ENCODE measurements at regions of chr10 and their contacts with region 1.

Region 1: GRCh38 chr10:30392564-30392990 is 41.4 kb upstream of the MAP3K8 start:
- DNase-seq: peak; percentile 80 to 86 (median 81)
- ATAC-seq: peak; percentile 100
- H3K4me3 ChIP-seq: no peak overlapping the region
- H3K4me1 ChIP-seq: peaks cover 6% of the 10 kb centered on the region
- CTCF ChIP-seq: peak; percentile 92

Region 2: GRCh38 chr10:30059209-30060107 is 333.1 kb before region 1 on chr10 and contains the start of gene JCAD:
- intact Hi-C with region 1: no loop called
- DNase-seq: peak; percentile 61 to 80 (median 70)
- ATAC-seq: peak; percentile 90
- H3K4me3 ChIP-seq: no peak within 1 kb of the TSS
- H3K4me1 ChIP-seq: peaks cover 3% of the 10 kb centered on the region
- CTCF ChIP-seq: no peak
- total RNA-seq, gene JCAD: 4.9 to 256 (median 9.0) TPM

Region 3: DNA sequence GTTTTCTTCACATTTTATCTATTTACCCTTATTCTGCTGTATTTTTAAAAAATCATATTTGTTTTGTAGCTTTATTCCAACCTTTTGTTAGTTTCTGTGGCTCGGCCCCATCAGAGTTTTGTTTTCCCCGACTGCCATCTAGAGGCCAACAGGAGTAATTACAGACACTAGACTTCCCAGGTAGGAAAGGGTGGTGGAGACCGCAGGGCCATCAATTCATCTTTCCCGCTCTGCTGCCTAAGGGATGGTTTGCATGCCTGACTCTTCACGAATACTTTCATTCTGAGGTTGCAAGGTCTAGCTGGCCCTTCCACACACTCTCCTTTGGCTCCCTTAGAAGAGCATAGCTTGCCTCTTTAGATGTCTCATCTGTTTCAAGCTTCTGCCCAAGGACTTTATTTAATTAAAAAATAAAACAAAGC is 198.7 kb after region 1 on chr10:
- intact Hi-C with region 1: loop called (anchors 2 to 5 kb)
- DNase-seq: peak in 1 of 3 donors; percentile 34
- ATAC-seq: peak; percentile 71
- H3K4me3 ChIP-seq: no peak overlapping the region
- H3K4me1 ChIP-seq: no peaks in the 10 kb centered on the region
- CTCF ChIP-seq: peak; percentile 54

Region 4: DNA sequence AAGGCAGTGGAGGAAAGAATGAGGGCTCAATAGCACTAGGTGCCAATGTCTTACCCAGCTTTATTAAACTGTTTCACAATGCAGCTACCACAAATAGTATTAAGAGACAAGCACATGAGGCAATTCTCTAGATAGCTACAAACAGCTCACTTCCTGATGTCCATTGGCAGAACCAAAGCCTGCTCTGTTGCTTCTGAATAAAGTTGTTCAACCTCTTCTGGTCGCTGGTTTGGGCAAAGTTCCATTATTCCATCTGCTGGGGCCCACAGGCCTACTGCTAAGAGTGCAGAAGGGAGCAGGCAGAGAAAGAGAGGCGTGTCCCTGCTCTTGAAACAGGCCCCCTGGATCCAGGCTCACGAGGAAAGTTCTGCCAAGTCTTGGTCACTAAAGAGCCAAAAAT is 465.2 kb after region 1 on chr10:
- intact Hi-C with region 1: no loop called
- DNase-seq: peak in 1 of 3 donors; percentile 35
- ATAC-seq: peak; percentile 46
- H3K4me3 ChIP-seq: no peak overlapping the region
- H3K4me1 ChIP-seq: no peaks in the 10 kb centered on the region
- CTCF ChIP-seq: no peak

Measured in mucosa of descending colon (tissue), 3 donors.